ENCODE measurements at regions of chr12 and their contacts with region 1.

Region 1: DNA sequence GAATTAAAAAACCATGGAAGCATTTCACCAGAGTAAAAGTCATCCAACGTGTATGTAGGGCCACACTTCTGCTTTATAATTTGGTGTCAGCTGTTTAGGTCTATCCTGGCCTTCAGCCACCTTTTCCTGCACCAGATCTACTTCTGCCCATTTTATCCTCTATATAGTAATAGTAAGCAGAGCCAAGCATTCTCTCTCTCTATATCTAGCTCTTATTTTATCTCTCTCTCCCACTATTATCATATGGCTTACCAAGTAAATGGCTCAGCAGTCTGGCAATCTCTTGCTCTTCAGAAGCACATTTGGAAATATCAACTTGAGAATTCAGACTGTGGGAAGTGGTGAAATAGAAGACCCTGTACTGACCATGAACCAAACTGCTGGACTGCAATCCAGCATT is 84.1 kb upstream of the FKBP4 start:
- DNase-seq: no peak
- H3K4me3 ChIP-seq: no peak overlapping the region
- H3K27ac ChIP-seq: no peak overlapping the region
- H3K4me1 ChIP-seq: no peaks in the 10 kb centered on the region
- H3K27me3 ChIP-seq: no peaks in the 10 kb centered on the region
- CTCF ChIP-seq: no peak
- POLR2A ChIP-seq: no peak

Region 2: DNA sequence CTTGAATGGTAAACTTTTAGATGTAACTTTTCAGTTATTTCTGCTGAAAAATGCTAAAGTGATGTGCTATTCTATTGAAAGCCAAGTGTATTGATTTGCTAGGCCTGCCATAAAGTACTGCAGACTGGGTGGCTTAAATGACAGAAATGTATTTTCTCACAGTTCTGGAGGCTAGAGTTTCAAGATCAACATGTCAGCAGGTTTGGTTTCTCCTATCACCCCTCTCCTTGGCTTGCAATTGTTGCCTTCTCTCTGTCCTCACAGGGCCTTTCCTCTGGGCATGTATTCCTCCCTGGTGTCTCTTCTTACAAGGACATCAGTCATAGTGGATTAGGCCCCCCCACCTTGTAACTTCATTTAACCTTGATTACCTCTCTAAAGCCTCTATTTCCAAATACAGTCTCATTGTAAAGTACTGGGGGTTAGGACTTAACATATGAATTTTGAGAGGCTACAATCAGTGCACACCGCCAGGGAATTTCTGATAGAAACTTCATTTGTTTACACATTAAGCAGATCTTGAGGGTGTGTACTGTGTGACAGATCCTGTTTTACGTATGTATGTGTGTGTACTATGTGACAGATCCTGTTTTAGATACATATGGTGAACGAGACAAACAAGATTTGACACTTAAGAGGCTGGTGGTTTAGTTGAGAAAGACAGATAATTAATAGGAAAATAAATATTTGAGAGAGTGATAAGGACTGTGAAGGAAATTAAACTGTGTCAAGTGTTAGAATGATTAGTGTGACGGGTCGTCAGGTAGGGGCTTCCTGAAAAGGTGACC is 970.3 kb before region 1 on chr12:
- intact Hi-C with region 1: no loop called
- DNase-seq: no peak
- H3K4me3 ChIP-seq: no peak overlapping the region
- H3K27ac ChIP-seq: no peak overlapping the region
- H3K4me1 ChIP-seq: no peaks in the 10 kb centered on the region
- H3K27me3 ChIP-seq: no peaks in the 10 kb centered on the region
- CTCF ChIP-seq: no peak
- POLR2A ChIP-seq: no peak

Region 3: GRCh38 chr12:2336409-2336829 is 374.3 kb before region 1 on chr12:
- intact Hi-C with region 1: no loop called
- DNase-seq: no peak
- H3K4me3 ChIP-seq: no peak overlapping the region
- H3K27ac ChIP-seq: peak overlapping the region; percentile 67 to 72
- H3K4me1 ChIP-seq: no peaks in the 10 kb centered on the region
- H3K27me3 ChIP-seq: no peaks in the 10 kb centered on the region
- CTCF ChIP-seq: no peak
- POLR2A ChIP-seq: no peak

Region 4: DNA sequence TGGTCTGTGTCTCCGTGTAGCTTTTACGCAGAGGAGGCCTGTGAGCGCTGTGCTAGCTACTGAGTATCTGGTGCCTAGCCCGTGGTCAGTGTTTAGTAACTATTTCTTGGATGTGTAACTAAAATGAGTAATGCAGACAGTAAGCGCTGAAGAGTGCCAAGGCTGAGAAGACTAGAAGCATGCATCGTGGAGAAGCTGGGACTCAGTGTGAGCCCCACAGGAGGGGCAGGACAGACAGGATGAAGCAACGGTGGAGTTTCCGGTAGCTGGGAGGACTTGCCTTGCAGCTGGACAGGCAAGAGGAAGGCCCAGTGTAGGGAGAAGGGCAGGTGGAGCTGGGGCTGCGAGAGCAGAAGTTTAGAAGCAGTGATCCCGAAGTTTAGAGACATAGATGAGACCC is 149.3 kb before region 1 on chr12:
- intact Hi-C with region 1: loop called (anchors 5 kb)
- DNase-seq: no peak
- H3K4me3 ChIP-seq: no peak overlapping the region
- H3K27ac ChIP-seq: no peak overlapping the region
- H3K4me1 ChIP-seq: no peaks in the 10 kb centered on the region
- H3K27me3 ChIP-seq: no peaks in the 10 kb centered on the region
- CTCF ChIP-seq: no peak
- POLR2A ChIP-seq: no peak

Region 5: DNA sequence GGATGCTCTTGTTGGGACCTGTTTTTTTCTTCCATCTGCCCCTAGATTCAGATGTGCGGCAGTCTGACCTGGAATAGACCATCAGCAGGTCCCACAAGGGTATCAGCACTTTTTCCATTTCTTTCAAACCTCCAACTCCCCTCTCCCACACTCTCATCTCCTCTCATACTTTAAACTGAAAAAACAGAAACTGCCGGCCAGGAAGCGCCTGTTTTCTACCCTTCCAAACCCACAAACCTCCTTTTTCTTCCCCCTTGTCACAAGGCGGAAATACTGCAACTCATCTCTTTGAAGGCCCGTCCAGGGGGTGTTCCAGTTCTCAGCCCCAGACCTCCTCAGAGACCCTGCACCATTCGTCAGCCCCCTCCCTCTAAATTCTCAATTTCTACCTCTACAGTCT is 21.6 kb after region 1 on chr12:
- intact Hi-C with region 1: loop called (anchors 1 kb)
- DNase-seq: no peak
- H3K4me3 ChIP-seq: no peak overlapping the region
- H3K27ac ChIP-seq: no peak overlapping the region
- H3K4me1 ChIP-seq: no peaks in the 10 kb centered on the region
- H3K27me3 ChIP-seq: no peaks in the 10 kb centered on the region
- CTCF ChIP-seq: no peak
- POLR2A ChIP-seq: no peak

Measured in breast epithelium (tissue), 4 donors.